HEK293 (cell line): ENCODE measurements at regions of chr15 and their contacts with region 1.

Region 1: DNA sequence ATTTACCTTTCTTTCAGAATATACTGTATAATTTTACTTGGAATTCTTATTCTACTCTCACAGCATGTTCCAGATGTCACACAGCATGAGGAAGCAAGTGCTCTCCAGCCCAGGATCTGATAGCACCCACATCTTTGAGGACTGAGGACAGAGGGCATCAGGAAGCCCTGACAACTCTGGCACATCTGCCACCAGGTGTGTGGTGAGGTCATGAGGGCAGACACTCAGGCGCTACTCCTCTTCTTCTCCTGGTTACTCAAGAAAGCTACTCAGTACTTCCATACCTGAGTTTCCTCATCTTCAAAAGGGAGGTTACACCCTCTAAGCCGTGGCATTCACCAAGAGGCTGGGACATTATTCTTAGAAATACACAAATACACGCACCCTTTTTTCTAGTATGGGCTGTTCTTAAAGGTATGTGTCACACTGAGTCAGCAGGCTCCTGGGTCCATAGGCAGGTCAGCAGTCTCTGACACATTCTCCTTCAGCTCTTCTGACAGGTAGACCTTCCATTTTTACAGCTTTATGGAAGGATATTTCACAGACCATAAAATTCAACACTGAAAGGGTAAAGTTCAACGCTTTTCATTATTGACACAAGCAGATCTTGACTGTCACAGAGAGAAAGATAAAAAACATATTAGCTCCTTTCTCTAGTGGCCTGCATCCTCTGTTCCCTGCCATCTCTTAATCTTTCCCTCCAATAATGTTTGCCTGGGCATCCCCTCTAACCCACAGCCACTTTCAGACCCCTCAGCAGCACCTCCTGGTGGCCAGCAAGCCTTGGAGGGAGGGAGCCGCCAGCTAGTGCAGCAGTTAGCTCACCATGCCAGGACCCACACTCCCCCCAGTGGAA is 103.2 kb upstream of the TJP1 start:
- H3K4me3 ChIP-seq: no peak overlapping the region
- H3K27ac ChIP-seq: 0 out of 2 replicates have a peak overlapping the region, but pooled peaks have one; percentile 16
- H3K4me1 ChIP-seq: peaks cover 13% of the 10 kb centered on the region; the same call in 1 of the 2 replicates
- CTCF ChIP-seq: peak; percentile 92

Region 2: DNA sequence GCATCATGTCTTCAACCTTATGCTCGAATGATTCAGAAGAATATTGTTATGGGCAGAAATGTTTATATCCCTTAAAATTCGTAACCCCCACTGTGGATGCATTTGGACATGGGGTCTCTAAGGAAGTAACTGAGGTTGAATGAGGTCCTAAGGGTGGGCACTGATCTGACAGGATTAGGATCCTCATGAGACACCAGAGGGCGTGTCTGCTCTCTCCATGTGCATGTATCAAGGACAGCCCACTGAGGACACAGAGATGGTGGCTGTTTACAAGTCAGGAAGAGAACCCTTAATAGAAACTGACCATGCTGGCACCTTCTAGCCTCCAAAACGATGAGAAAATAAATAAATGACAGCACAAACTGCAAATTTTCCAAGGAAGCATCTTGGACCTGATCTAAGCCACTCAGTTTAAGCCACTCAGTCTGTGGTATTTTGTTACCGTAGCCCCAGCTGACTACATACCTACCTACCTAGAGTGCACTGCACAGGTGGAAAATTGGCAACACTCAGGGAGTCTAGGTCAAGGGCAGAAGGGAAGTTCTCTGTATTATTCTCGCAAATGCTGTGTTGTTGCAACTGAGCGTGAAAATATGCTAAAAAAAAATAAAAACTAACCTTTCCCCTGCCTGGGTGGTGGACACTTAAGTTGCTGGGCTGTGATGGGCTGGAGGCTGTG is 229.8 kb before region 1 on chr15:
- CTCF ChIA-PET with region 1: interaction called, 10 read pairs
- POLR2A ChIA-PET with region 1: no interaction called
- H3K4me3 ChIP-seq: no peak overlapping the region
- H3K27ac ChIP-seq: no peak overlapping the region
- H3K4me1 ChIP-seq: no peaks in the 10 kb centered on the region
- CTCF ChIP-seq: 0 out of 2 replicates have a peak, but pooled peaks have one; percentile 10

Region 3: GRCh38 chr15:29815000-29815710 is 110.3 kb before region 1 on chr15:
- CTCF ChIA-PET with region 1: interaction called, 26 read pairs
- POLR2A ChIA-PET with region 1: interaction called, 18 read pairs
- H3K4me3 ChIP-seq: no peak overlapping the region
- H3K27ac ChIP-seq: peak overlapping the region; percentile 28; the same call in 1 of the 2 replicates
- H3K4me1 ChIP-seq: peaks cover 18% of the 10 kb centered on the region
- CTCF ChIP-seq: no peak

Region 4: DNA sequence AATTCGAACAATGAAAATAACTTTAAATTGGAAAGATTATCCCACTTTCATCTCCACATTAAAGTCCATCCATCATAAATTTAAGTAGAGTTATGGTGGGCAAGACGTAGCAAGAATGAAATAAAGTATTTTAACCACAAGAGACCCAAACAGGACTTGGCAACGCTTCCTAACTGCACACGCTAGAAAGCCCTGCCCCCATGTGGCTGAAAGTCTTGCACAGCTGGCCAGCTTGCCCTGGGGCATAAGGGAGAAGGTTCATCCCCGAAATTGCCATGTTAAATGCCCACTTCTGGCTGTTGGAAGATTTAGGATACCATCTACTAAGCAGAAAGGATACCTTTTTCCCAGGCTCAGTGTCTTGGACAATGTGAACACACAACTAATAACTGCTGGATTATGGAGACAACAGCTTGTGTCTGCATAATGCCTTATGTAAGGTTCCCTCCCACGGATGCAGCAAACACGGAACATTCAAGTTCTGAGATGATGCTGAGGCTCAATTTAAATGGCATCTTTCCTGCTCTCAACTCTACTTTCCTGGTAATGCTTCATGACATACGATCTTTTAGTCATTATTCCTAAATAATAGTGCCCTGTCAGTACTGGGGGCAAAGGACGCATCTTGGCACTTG is 13.4 kb after region 1 on chr15:
- CTCF ChIA-PET with region 1: interaction called, 11 read pairs
- POLR2A ChIA-PET with region 1: no interaction called
- H3K4me3 ChIP-seq: no peak overlapping the region
- H3K27ac ChIP-seq: no peak overlapping the region
- H3K4me1 ChIP-seq: peaks cover 7% of the 10 kb centered on the region
- CTCF ChIP-seq: peak; percentile 38; the same call in 1 of the 2 replicates

Region 5: GRCh38 chr15:29986946-29987345 is 61.5 kb after region 1 on chr15:
- CTCF ChIA-PET with region 1: no interaction called
- POLR2A ChIA-PET with region 1: no interaction called
- H3K4me3 ChIP-seq: no peak overlapping the region
- H3K27ac ChIP-seq: no peak overlapping the region
- H3K4me1 ChIP-seq: no peaks in the 10 kb centered on the region
- CTCF ChIP-seq: no peak

Region 6: DNA sequence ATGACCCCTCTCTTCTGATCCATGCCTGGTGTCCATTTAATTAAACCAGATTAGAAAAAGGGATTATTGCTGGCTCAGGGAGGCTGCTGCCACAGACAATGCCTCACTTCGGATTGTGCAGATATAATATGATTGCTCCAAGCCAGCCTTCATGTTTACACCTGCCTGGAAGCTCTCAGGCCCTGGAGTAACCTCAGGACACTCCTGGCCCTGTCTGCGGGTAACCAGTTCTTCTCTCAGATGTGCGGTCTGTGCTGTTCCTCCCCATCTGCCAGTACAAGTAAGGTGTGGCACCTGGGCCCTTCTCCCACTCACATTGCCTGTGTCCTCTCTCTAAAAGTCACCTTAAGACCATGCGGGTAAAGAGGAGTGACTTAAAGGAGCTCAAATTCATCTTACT is 148.5 kb after region 1 on chr15:
- CTCF ChIA-PET with region 1: interaction called, 11 read pairs
- POLR2A ChIA-PET with region 1: no interaction called
- H3K4me3 ChIP-seq: no peak overlapping the region
- H3K27ac ChIP-seq: no peak overlapping the region
- H3K4me1 ChIP-seq: no peaks in the 10 kb centered on the region
- CTCF ChIP-seq: no peak